Activated CD4-positive, alpha-beta memory T cell treated with anti-CD3 and anti-CD28 coated beads, Interleukin-2, amount 10 ng/mL, durations not matched to agents 7 days and 5 days (primary cell): ENCODE measurements at regions of chr11 and their contacts with region 1.

Region 1: GRCh38 chr11:108647701-108648527 is 17.0 kb upstream of the DDX10 start:
- DNase-seq: peak; percentile 68
- H3K4me3 Mint-ChIP-seq: no peak overlapping the region
- H3K27ac Mint-ChIP-seq: no peak overlapping the region
- H3K4me1 Mint-ChIP-seq: no peaks in the 10 kb centered on the region
- H3K27me3 Mint-ChIP-seq: peaks cover 3% of the 10 kb centered on the region

Region 2: GRCh38 chr11:108008656-108009496 is 639.0 kb before region 1 on chr11 and contains the start of gene CUL5:
- CTCF ChIA-PET with region 1: interaction called, 11 read pairs
- POLR2A ChIA-PET with region 1: interaction called, 4 read pairs
- DNase-seq: peak; percentile 90
- H3K4me3 Mint-ChIP-seq: peak within 1 kb of the TSS; percentile 98
- H3K27ac Mint-ChIP-seq: peak within 1 kb of the TSS; percentile 92
- H3K4me1 Mint-ChIP-seq: peaks cover 17% of the 10 kb centered on the region
- H3K27me3 Mint-ChIP-seq: no peaks in the 10 kb centered on the region
- total RNA-seq, gene CUL5: 27.1 to 28.3 TPM

Region 3: DNA sequence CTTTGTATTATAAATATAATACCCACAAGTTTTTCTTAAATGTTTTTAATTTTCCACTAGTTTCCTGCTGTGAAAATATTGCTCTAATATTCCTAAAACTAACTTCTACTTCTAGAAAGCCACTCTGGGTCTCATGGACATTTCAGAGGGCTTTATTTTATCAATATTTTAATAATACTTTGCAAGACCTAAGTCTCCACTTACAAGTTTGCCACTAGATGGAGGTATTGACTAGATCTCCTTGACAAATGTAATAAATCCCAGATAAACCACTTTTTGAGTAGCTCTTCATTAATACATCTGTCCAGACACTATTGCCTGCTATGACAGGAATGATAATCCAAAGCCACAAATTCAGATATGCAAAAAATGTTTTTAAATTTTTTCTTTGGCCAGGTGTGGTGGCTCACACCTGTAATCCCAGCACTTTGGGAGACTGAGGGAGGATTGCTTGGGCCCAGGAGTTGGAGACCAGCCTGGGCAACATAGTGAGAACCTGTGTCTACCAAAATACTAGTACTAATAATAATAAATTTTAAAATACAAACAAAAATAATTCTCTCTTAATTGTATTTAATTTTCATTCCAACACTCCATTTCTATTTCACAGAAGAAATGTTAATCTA is 530.1 kb before region 1 on chr11:
- CTCF ChIA-PET with region 1: interaction called, 39 read pairs
- POLR2A ChIA-PET with region 1: interaction called, 4 read pairs
- DNase-seq: no peak
- H3K4me3 Mint-ChIP-seq: no peak overlapping the region
- H3K27ac Mint-ChIP-seq: no peak overlapping the region
- H3K4me1 Mint-ChIP-seq: peaks cover 25% of the 10 kb centered on the region
- H3K27me3 Mint-ChIP-seq: no peaks in the 10 kb centered on the region

Region 4: DNA sequence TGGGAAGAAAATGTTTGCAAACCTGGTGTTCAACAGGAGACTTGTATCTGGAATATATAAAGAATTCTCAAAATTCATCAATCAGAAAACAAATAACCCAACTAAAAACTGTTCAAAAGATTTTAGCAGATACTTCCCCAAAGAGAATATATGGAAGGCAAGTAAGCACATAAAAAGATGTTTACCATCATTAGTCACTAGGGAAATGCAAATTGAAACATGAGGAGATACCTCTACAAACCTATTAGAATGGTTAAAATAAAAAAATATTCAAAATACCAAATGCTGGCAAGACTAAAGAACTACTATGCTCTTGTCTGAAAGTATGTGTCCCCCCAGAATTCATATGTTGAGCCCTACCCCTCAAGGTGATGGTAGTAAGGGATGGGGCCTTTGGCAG is 62.9 kb before region 1 on chr11:
- CTCF ChIA-PET with region 1: no interaction called
- POLR2A ChIA-PET with region 1: no interaction called
- DNase-seq: no peak
- H3K4me3 Mint-ChIP-seq: no peak overlapping the region
- H3K27ac Mint-ChIP-seq: no peak overlapping the region
- H3K4me1 Mint-ChIP-seq: no peaks in the 10 kb centered on the region
- H3K27me3 Mint-ChIP-seq: no peaks in the 10 kb centered on the region

Region 5: GRCh38 chr11:108664730-108665525 is 17.0 kb after region 1 on chr11 and contains the start of gene DDX10:
- CTCF ChIA-PET with region 1: interaction called, 27 read pairs
- POLR2A ChIA-PET with region 1: no interaction called
- DNase-seq: peak; percentile 98
- H3K4me3 Mint-ChIP-seq: peak within 1 kb of the TSS; percentile 99
- H3K27ac Mint-ChIP-seq: peak within 1 kb of the TSS; percentile 66
- H3K4me1 Mint-ChIP-seq: peaks cover 32% of the 10 kb centered on the region
- H3K27me3 Mint-ChIP-seq: no peaks in the 10 kb centered on the region
- total RNA-seq, gene DDX10: 20.5 to 23.2 TPM